GM13977 (cell line): ENCODE measurements at regions of chr1 and their contacts with region 1.

Region 1: DNA sequence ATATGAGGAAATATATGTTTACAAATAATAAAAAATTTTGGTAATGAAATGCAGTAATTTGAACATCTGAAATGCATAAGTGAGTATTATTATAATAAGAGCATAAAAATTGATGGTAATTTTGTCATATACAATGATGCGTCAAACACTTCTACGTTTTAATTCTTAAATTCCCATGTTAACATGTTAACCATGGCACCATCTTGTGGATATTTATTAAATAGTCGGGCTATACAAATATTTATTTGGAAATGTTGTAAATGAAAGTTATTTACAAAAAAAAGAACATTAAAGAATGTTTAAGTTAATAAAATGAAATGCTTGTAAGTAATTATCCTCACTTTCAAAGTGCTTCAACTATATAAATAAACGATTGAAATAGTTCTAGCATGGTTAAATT is 57.2 kb upstream of the C1orf185 start:
- DNase-seq: no peak
- CTCF ChIP-seq: no peak

Region 2: DNA sequence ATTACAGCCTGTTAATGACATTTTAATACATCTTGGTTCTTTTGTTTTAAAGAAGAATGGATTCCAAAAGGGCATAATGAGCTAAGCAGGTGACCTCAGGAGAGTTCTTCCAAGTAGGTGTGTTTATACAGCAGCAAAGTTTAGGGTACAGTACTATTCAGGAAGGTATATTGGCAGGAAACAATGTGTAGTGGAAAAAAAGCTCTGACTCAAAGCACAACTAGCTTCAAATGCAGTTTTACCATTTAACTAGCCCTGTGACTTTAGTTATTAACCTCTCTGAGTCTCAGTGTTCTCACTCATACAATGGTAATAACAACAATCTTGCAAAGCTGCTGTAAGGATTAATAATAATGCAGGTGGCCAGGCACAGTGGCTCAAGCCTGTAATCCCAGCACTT is 114.6 kb before region 1 on chr1:
- in situ Hi-C with region 1: loop called (anchors 10 kb)
- DNase-seq: peak; percentile 22
- CTCF ChIP-seq: no peak